ENCODE measurements at regions of chr20 and their contacts with region 1.

Region 1: GRCh38 chr20:5569021-5569420 is 181.2 kb upstream of the SHLD1 start:
- DNase-seq: peak; percentile 74
- ATAC-seq: peak; percentile 93
- H3K4me3 Mint-ChIP-seq: no peak overlapping the region
- H3K27ac Mint-ChIP-seq: peak overlapping the region; percentile 84
- H3K4me1 Mint-ChIP-seq: peaks cover 20% of the 10 kb centered on the region
- H3K27me3 Mint-ChIP-seq: no peaks in the 10 kb centered on the region
- CTCF ChIP-seq: peak; percentile 67

Region 2: GRCh38 chr20:5513975-5514516 is 55.0 kb before region 1 on chr20:
- CTCF ChIA-PET with region 1: no interaction called
- POLR2A ChIA-PET with region 1: no interaction called
- intact Hi-C with region 1: no loop called
- DNase-seq: no peak
- ATAC-seq: no peak
- H3K4me3 Mint-ChIP-seq: no peak overlapping the region
- H3K27ac Mint-ChIP-seq: no peak overlapping the region
- H3K4me1 Mint-ChIP-seq: peaks cover 7% of the 10 kb centered on the region
- H3K27me3 Mint-ChIP-seq: no peaks in the 10 kb centered on the region
- CTCF ChIP-seq: no peak

Region 3: DNA sequence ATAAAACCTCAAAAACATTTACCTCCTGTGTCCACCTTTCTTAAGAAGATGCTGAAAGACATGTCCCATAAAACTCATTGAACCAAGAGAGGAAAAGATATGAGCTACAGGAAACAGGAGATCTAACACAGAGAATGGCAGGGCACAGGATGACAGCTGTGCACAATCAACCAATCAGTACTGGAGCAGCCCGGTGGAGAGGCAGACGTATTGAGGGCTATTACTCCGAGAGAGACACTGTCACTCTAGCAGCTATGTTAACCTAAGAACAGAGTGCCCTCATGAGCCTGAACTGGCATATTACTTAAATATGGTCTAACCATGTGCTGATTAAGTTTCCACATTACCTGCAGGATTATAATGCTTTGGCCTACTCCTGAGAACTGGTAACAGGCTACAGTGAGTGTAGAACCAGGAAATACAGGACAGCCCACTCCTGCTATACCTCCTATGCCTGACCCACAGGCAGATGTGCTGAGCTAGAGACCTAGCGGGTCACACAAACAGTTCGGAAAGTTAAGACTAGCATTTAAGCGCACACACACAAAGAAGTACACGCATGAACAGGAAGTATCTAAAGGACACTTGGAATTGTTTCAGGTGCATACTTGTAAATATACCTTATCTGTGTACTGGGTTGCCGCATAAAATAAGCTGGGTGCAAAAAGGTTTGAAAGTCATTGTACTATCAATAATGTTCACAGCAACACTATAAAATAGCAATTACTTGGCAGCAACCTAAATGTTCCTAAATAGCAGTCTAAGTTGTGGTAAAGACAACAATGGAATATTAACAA is 18.1 kb before region 1 on chr20:
- CTCF ChIA-PET with region 1: interaction called, 35 read pairs
- POLR2A ChIA-PET with region 1: no interaction called
- intact Hi-C with region 1: no loop called
- DNase-seq: no peak
- ATAC-seq: no peak
- H3K4me3 Mint-ChIP-seq: no peak overlapping the region
- H3K27ac Mint-ChIP-seq: peak overlapping the region; percentile 21
- H3K4me1 Mint-ChIP-seq: peaks cover 17% of the 10 kb centered on the region
- H3K27me3 Mint-ChIP-seq: no peaks in the 10 kb centered on the region
- CTCF ChIP-seq: no peak

Region 4: GRCh38 chr20:5557123-5557522 is 11.9 kb before region 1 on chr20:
- CTCF ChIA-PET with region 1: interaction called, 35 read pairs
- POLR2A ChIA-PET with region 1: interaction called, 3 read pairs
- intact Hi-C with region 1: no loop called
- DNase-seq: peak; percentile 79
- ATAC-seq: peak; percentile 79
- H3K4me3 Mint-ChIP-seq: no peak overlapping the region
- H3K27ac Mint-ChIP-seq: peak overlapping the region; percentile 18
- H3K4me1 Mint-ChIP-seq: no peaks in the 10 kb centered on the region
- H3K27me3 Mint-ChIP-seq: no peaks in the 10 kb centered on the region
- CTCF ChIP-seq: peak; percentile 73

Region 5: DNA sequence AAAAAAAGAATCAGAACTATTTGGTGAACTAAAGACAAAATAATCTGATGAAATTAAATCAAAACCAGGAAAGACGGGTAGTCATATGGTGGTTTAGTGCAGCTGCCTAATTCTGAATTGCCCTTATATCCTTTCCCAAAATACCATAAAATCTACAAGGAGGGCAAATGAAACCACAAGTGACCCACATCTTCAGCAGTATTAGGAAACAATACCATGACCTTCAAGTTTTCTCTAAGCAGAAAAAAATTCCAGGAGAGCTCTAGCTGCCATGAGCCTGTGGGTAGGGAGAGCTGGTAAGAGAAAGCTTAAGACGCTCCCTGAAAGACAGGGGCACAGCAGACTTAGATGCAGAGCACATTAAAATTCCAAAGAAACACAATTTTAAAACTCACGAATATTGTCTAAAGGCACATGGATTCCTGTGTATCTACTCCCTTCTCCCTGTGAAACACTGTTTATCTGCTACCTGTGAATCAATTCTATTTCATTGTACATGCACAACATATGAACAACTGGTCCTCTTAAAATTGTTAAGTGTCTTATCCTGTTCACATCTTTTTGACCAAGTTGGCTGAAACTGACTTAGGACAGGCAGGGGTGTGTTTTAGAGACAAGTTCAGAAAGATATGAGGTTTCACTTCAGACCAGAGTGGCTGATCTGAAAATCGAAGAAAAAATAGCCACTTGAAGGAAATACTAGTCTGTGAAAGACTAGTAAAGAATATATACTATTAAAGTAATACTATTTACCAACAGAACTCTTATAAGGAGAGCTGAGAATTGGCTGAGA is 27.6 kb after region 1 on chr20:
- CTCF ChIA-PET with region 1: interaction called, 30 read pairs
- POLR2A ChIA-PET with region 1: no interaction called
- intact Hi-C with region 1: no loop called
- DNase-seq: no peak
- ATAC-seq: no peak
- H3K4me3 Mint-ChIP-seq: no peak overlapping the region
- H3K27ac Mint-ChIP-seq: peak overlapping the region; percentile 85
- H3K4me1 Mint-ChIP-seq: peaks cover 58% of the 10 kb centered on the region
- H3K27me3 Mint-ChIP-seq: no peaks in the 10 kb centered on the region
- CTCF ChIP-seq: no peak